ENCODE measurements at regions of chr18 and their contacts with region 1.

Region 1: DNA sequence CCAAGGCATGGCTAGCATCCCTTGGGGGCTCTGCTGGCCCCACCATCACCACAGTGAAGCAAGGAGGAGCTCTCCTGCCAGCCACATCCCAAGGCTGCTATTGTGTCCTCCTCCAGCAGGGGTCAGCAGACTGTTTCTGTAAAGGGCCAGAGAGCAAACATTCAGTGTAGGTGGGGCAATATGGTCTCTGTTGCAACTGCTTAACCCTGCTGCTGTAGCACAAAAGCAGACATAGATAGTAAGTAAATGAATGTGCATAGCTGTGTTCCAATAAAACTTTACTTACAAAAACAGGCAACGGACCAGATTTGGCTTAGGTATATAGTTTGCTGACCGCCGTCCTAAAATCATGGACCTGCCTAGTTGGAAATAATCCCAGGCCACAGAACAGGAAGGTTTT is 36.4 kb upstream of the ZBTB7C start:
- DNase-seq: peak; percentile 83
- H3K4me3 Mint-ChIP-seq: no peak overlapping the region
- H3K27ac Mint-ChIP-seq: no peak overlapping the region
- H3K4me1 Mint-ChIP-seq: peaks cover 7% of the 10 kb centered on the region
- H3K27me3 Mint-ChIP-seq: peaks cover 78% of the 10 kb centered on the region

Region 2: DNA sequence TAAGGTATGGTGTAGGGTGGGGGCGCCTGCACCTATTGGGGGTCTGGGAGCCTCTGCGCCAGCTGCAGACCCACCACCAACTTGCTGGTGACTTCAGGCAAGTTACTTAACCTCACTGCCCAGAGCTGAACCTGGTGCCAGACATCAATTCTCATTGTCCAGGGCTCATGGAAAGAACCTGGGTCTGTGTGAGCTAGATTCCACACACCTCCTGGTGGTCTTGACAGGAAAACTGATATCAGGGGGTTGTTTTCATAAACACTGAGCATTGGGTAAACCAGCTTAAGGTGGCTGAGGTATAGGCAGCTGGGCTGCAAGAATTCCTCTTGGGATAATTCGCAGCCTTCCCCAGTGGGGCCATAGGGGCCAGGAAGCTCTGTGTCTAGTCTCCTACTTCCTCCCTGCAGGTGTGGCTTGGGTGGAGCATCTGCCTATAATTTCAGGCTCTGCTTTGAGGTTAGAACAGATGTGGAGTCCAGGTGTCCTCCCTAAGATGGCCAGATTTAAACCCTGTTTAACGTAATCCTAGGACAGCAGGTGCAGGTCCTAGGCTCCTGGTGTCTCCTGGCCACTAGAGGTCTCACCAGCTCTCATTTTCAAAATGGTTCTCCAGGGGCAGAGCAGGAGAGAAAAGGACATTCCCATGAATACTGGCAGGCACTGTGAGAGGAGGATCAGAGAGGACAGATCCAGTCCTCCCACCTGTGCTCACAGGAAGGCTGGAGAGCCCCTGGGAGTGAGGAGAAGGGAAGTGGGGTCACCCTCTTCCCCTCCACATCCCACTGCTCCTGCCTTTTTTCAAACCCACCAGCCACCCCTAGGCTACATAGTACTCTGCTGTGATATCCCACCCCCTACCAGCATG is 414.7 kb before region 1 on chr18:
- CTCF ChIA-PET with region 1: interaction called, 11 read pairs
- DNase-seq: peak; percentile 36
- H3K4me3 Mint-ChIP-seq: no peak overlapping the region
- H3K27ac Mint-ChIP-seq: no peak overlapping the region
- H3K4me1 Mint-ChIP-seq: no peaks in the 10 kb centered on the region
- H3K27me3 Mint-ChIP-seq: peaks cover 11% of the 10 kb centered on the region

Region 3: GRCh38 chr18:48230467-48231113 is 214.9 kb before region 1 on chr18:
- CTCF ChIA-PET with region 1: interaction called, 21 read pairs
- DNase-seq: peak; percentile 49
- H3K4me3 Mint-ChIP-seq: no peak overlapping the region
- H3K27ac Mint-ChIP-seq: no peak overlapping the region
- H3K4me1 Mint-ChIP-seq: peaks cover 40% of the 10 kb centered on the region
- H3K27me3 Mint-ChIP-seq: peaks cover 29% of the 10 kb centered on the region

Region 4: DNA sequence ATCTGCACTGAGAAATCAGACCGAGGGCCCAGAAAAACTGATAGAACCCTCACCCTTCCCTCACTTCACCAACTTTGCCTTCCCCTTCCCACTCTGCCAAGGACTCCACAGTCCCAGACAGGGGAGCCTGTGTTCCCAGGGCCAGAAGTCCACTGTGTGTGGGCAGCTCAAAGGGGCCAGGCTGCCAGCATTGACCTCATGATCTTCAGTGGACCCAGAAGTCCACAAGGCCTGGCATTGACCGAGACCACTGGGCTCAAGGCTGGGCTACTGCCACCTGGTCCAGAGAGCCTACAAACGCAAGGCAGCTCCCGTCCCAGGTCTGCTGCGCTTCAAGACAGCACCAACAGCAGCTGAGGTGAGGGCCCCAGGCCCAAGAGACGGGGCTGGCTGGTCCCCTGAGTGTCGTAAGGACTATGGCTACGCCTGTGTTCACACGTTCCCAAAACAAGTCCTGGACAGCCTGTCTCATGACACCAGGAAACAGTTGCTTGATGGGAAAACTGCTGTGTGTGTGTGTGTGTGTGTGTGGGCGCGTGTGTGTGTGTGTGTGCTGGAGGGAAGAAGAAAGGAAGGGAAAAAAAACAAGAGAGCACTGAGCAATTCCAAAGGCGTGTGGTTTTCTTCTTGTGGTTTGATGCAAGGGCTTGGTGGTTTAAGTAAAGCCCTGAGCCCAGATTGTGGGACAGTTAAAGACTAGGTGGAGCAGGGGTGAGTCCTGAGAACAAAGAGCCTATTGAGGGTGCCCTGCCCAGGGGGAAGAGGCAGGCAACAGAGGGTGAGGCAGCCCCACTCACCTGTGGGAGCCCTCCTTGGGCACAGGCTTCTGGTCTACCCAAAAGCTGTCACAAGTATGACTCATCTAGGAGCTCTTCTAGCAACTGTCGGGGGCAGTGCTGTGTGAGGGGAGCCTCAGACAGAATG is 10.3 kb after region 1 on chr18:
- CTCF ChIA-PET with region 1: interaction called, 14 read pairs
- DNase-seq: peak; percentile 52
- H3K4me3 Mint-ChIP-seq: no peak overlapping the region
- H3K27ac Mint-ChIP-seq: peak overlapping the region; percentile 12
- H3K4me1 Mint-ChIP-seq: peaks cover 18% of the 10 kb centered on the region
- H3K27me3 Mint-ChIP-seq: peaks cover 88% of the 10 kb centered on the region

Region 5: GRCh38 chr18:48470484-48471180 is 25.1 kb after region 1 on chr18:
- CTCF ChIA-PET with region 1: interaction called, 15 read pairs
- DNase-seq: no peak
- H3K4me3 Mint-ChIP-seq: no peak overlapping the region
- H3K27ac Mint-ChIP-seq: no peak overlapping the region
- H3K4me1 Mint-ChIP-seq: no peaks in the 10 kb centered on the region
- H3K27me3 Mint-ChIP-seq: peaks cover 66% of the 10 kb centered on the region

Region 6: DNA sequence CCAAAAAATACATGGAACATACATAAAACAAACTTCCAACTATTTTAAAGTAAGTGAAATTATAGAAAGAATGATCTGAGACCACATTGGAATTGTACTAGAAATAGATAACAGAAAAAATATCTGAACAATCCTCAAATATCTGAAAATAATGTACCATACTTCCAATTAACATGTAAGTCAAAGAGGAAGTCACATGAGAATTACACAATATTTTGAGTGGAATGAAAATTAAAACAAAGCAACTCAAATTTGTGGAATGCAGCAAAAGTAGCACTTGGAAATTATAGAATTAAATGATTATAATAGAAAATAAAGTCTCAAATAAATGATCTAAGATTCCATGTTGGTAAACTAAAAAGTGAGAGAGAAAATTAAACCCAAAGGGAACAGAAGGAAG is 55.0 kb after region 1 on chr18:
- CTCF ChIA-PET with region 1: no interaction called
- DNase-seq: no peak
- H3K4me3 Mint-ChIP-seq: no peak overlapping the region
- H3K27ac Mint-ChIP-seq: no peak overlapping the region
- H3K4me1 Mint-ChIP-seq: no peaks in the 10 kb centered on the region
- H3K27me3 Mint-ChIP-seq: peaks cover 6% of the 10 kb centered on the region

Region 7: GRCh38 chr18:48519431-48520100 is 74.0 kb after region 1 on chr18:
- CTCF ChIA-PET with region 1: no interaction called
- DNase-seq: no peak
- H3K4me3 Mint-ChIP-seq: no peak overlapping the region
- H3K27ac Mint-ChIP-seq: no peak overlapping the region
- H3K4me1 Mint-ChIP-seq: no peaks in the 10 kb centered on the region
- H3K27me3 Mint-ChIP-seq: peaks cover 21% of the 10 kb centered on the region